Gastrocnemius medialis (tissue), 4 donors: ENCODE measurements at regions of chr9 and their contacts with region 1.

Region 1: GRCh38 chr9:132079391-132080091 is at the start of gene MED27:
- DNase-seq: peak; percentile 84 to 86
- ATAC-seq: peak; percentile 96 to 97
- H3K4me3 ChIP-seq: peak within 1 kb of the TSS; percentile 63 to 99 (median 94)
- H3K27ac ChIP-seq: peak within 1 kb of the TSS; percentile 71 to 87 (median 86)
- H3K4me1 ChIP-seq: peaks cover 30 to 40% of the 10 kb centered on the region in 2 donors
- H3K27me3 ChIP-seq: no peaks in the 10 kb centered on the region
- CTCF ChIP-seq: no peak
- POLR2A ChIP-seq: peak; percentile 34 to 59
- total RNA-seq, gene MED27: 11.6 to 20.3 (median 13.9) TPM

Region 2: DNA sequence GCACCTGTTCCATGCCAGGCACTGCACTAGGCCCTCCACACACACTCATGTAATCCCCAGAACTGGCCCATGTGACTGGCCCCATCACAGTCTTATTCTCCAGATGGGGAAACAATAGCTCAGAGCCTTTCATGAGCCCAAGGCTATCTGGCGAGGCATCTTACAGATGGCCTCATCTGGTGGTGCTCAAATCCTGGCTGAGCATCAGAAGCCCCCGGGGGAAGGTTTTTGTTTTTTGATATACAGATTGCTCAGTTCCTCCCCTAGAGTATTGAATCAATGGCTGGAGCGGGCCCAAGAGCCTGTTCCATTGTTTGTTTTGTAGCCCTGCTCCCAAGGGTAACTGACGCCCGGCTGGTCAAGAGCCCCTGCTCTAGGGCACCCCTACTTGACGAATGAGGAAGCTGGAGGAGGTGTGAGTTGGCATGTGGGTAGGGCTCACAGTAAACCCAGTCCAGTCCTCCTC is 194.4 kb before region 1 on chr9:
- in situ Hi-C with region 1: no loop called
- intact Hi-C with region 1: no loop called
- DNase-seq: no peak
- ATAC-seq: no peak
- H3K4me3 ChIP-seq: no peak overlapping the region
- H3K27ac ChIP-seq: no peak overlapping the region
- H3K4me1 ChIP-seq: peaks cover 7 to 10% of the 10 kb centered on the region in 2 donors
- H3K27me3 ChIP-seq: no peaks in the 10 kb centered on the region
- CTCF ChIP-seq: no peak
- POLR2A ChIP-seq: no peak

Region 3: DNA sequence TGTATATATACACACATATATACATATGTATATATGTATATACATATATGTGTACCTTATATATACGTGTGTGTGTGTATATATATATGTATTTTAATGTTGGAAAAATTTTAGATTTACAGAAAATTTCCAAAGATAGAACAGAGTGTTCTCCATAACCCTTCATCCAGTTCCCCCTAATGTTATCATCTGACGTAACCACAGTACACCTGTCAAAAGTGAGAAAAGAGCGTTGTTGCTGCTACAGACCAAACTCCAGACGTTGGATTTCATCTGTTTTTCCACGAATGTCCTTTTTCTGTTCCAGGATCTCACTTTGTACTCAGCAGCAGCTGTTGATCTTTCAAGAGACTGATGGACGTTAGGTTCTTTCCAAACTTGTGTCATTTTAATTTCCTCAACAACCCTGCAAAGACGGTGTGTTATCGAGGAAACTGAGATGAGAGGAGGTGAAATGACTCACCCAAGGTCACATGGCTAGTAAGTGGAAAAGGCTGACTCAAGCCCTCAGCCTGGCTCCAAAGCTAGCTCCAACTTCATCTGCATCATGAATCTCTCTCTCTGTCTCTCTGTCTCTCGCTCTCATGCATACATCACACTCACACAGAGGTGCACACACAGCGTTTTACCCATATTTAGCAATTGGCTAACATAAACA is 65.3 kb after region 1 on chr9:
- in situ Hi-C with region 1: no loop called
- intact Hi-C with region 1: loop called (anchors 5 kb)
- DNase-seq: no peak
- ATAC-seq: peak in 1 of 2 donors; percentile 25
- H3K4me3 ChIP-seq: no peak overlapping the region
- H3K27ac ChIP-seq: no peak overlapping the region
- H3K4me1 ChIP-seq: peaks cover 8 to 11% of the 10 kb centered on the region in 2 donors
- H3K27me3 ChIP-seq: peaks cover 0 to 19% (median 3%) of the 10 kb centered on the region in 3 donors
- CTCF ChIP-seq: no peak
- POLR2A ChIP-seq: no peak

Region 4: DNA sequence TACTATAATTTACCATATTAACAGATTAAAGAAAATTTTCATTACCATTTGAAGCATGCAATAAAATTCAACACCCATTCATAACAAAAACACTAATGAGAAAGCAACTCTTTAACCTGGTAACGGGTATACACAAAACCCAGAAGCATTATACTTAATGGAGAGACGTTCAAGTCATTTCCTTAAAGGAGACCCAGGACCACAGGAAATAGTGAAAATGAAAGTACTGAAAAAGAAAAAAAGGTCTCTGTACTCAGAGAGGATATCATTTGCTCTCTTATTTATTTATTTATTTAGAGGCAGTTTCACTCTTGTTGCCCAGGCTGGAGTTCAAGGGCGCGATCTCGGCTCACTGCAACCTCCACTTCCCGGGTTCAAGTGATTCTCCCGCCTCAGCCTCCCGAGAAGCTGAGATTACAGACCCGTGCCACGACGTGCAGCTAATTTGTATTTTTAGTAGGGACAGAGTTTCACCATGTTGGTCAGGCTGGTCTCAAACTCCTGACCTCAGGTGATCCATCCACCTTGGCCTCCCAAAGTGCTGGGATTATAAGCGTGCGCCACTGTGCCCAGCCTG is 213.7 kb after region 1 on chr9:
- in situ Hi-C with region 1: no loop called
- intact Hi-C with region 1: no loop called
- DNase-seq: no peak
- ATAC-seq: no peak
- H3K4me3 ChIP-seq: no peak overlapping the region
- H3K27ac ChIP-seq: no peak overlapping the region
- H3K4me1 ChIP-seq: peaks cover 8 to 10% of the 10 kb centered on the region in 2 donors
- H3K27me3 ChIP-seq: no peaks in the 10 kb centered on the region
- CTCF ChIP-seq: no peak
- POLR2A ChIP-seq: no peak